ENCODE measurements at regions of chr2 and their contacts with region 1.

Region 1: GRCh38 chr2:165305391-165306096 is 66.3 kb downstream of the SCN2A start:
- DNase-seq: no peak
- ATAC-seq: no peak
- H3K4me3 ChIP-seq: no peak overlapping the region
- H3K27ac ChIP-seq: no peak overlapping the region
- H3K4me1 ChIP-seq: no peaks in the 10 kb centered on the region
- H3K27me3 ChIP-seq: peaks cover 10% of the 10 kb centered on the region
- CTCF ChIP-seq: no peak
- POLR2A ChIP-seq: no peak
- RAD21 ChIP-seq: no peak

Region 2: GRCh38 chr2:165293440-165294353 is 11.8 kb before region 1 on chr2:
- CTCF ChIA-PET with region 1: interaction called, 10 read pairs
- POLR2A ChIA-PET with region 1: no interaction called
- RAD21 ChIA-PET with region 1: interaction called in 1 of 2 experiments, 3 read pairs
- intact Hi-C with region 1: no loop called
- DNase-seq: peak; percentile 79
- ATAC-seq: peak; percentile 100
- H3K4me3 ChIP-seq: no peak overlapping the region
- H3K27ac ChIP-seq: no peak overlapping the region
- H3K4me1 ChIP-seq: no peaks in the 10 kb centered on the region
- H3K27me3 ChIP-seq: no peaks in the 10 kb centered on the region
- CTCF ChIP-seq: peak; percentile 58 to 77 (median 71)
- POLR2A ChIP-seq: no peak
- RAD21 ChIP-seq: peak; percentile 53

Region 3: DNA sequence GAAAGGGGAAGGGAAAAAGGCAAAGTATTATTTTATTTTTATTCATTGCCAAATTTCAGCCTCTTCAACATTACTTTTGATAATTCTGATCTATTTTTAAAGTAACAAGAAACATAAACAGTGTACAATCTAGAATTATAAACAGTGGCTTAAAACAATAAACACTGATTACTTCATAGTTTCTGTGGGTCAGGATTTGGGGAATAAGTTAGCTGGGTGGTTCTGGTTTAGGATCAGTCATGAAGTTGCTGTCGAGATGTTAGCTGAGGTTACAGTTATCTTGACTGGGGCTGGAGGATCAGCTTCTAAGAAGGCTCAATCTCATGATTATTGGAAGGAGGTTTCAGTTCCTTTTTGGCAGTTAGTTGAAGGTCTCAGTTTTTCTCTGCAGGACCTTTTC is 42.9 kb after region 1 on chr2:
- CTCF ChIA-PET with region 1: no interaction called
- POLR2A ChIA-PET with region 1: no interaction called
- RAD21 ChIA-PET with region 1: no interaction called
- intact Hi-C with region 1: no loop called
- DNase-seq: no peak
- ATAC-seq: no peak
- H3K4me3 ChIP-seq: no peak overlapping the region
- H3K27ac ChIP-seq: no peak overlapping the region
- H3K4me1 ChIP-seq: no peaks in the 10 kb centered on the region
- H3K27me3 ChIP-seq: no peaks in the 10 kb centered on the region
- CTCF ChIP-seq: no peak
- POLR2A ChIP-seq: no peak
- RAD21 ChIP-seq: no peak

Region 4: GRCh38 chr2:165462443-165462842 is 156.9 kb after region 1 on chr2:
- CTCF ChIA-PET with region 1: no interaction called
- POLR2A ChIA-PET with region 1: no interaction called
- RAD21 ChIA-PET with region 1: no interaction called
- intact Hi-C with region 1: no loop called
- DNase-seq: no peak
- ATAC-seq: no peak
- H3K4me3 ChIP-seq: no peak overlapping the region
- H3K27ac ChIP-seq: no peak overlapping the region
- H3K4me1 ChIP-seq: no peaks in the 10 kb centered on the region
- H3K27me3 ChIP-seq: no peaks in the 10 kb centered on the region
- CTCF ChIP-seq: no peak
- POLR2A ChIP-seq: no peak
- RAD21 ChIP-seq: no peak

Measured in HCT116 (cell line).